ENCODE measurements at regions of chr4 and their contacts with region 1.

Region 1: GRCh38 chr4:129641179-129641578 is 545.2 kb downstream of the C4orf33 start:
- DNase-seq: peak; percentile 42
- ATAC-seq: peak; percentile 75
- H3K4me3 ChIP-seq: no peak overlapping the region
- H3K27ac ChIP-seq: no peak overlapping the region
- H3K4me1 ChIP-seq: no peaks in the 10 kb centered on the region
- H3K27me3 ChIP-seq: no peaks in the 10 kb centered on the region
- CTCF ChIP-seq: peak; percentile 56 to 86 (median 74); a peak in 5 of 6 replicates
- POLR2A ChIP-seq: no peak
- RAD21 ChIP-seq: peak; percentile 55

Region 2: DNA sequence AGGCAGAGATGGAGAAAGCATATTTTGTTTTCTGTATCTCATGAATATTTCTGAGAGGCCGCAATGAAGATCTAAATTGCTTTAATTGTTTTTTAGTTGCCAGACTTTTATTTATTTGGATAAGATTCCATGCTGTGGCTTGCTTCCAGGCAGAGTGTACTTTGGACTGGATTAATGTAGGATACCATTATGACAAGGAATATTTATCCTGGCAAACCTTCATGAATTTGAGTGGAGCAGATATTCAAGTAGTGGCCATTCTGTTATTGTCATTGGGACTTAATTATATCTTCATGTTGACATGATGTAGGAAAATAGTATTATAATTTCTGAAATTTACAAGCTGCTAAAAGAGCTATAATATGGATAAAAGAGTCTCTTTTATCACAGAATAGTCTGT is 362.3 kb before region 1 on chr4:
- CTCF ChIA-PET with region 1: no interaction called
- POLR2A ChIA-PET with region 1: no interaction called
- RAD21 ChIA-PET with region 1: no interaction called
- intact Hi-C with region 1: no loop called
- DNase-seq: no peak
- ATAC-seq: no peak
- H3K4me3 ChIP-seq: no peak overlapping the region
- H3K27ac ChIP-seq: no peak overlapping the region
- H3K4me1 ChIP-seq: no peaks in the 10 kb centered on the region
- H3K27me3 ChIP-seq: no peaks in the 10 kb centered on the region
- CTCF ChIP-seq: no peak
- POLR2A ChIP-seq: no peak
- RAD21 ChIP-seq: no peak

Region 3: GRCh38 chr4:129344058-129344457 is 297.1 kb before region 1 on chr4:
- CTCF ChIA-PET with region 1: interaction called, 4 read pairs
- POLR2A ChIA-PET with region 1: no interaction called
- RAD21 ChIA-PET with region 1: no interaction called
- intact Hi-C with region 1: loop called (anchors 1 kb)
- DNase-seq: peak; percentile 39
- ATAC-seq: peak; percentile 89
- H3K4me3 ChIP-seq: no peak overlapping the region
- H3K27ac ChIP-seq: no peak overlapping the region
- H3K4me1 ChIP-seq: peaks cover 0 to 3% of the 10 kb centered on the region in 2 experiments; a peak in 1 of 4 replicates
- H3K27me3 ChIP-seq: no peaks in the 10 kb centered on the region
- CTCF ChIP-seq: peak; percentile 57 to 77 (median 68); a peak in 5 of 6 replicates
- POLR2A ChIP-seq: no peak
- RAD21 ChIP-seq: peak; percentile 80

Region 4: DNA sequence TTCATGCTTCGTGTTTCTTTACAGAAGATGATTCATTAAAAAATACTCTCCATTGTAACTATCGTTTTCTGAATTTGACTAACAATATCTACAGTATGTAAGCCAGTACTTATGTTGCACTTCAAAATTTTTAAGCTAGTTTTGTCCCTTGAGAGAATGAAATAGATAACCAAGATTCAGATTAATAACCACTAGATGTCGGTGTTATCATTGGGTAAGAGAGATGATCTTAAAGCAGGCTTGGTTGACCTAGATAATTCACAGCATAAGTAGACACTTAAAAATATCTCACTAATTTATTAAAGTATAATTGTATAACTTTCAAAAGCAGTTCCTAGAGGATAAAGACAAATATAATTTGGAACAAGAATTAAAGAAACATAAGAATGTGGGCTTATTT is 114.4 kb before region 1 on chr4:
- CTCF ChIA-PET with region 1: interaction called, 10 read pairs
- POLR2A ChIA-PET with region 1: no interaction called
- RAD21 ChIA-PET with region 1: no interaction called
- intact Hi-C with region 1: loop called (anchors 1 kb)
- DNase-seq: peak; percentile 21
- ATAC-seq: no peak
- H3K4me3 ChIP-seq: no peak overlapping the region
- H3K27ac ChIP-seq: no peak overlapping the region
- H3K4me1 ChIP-seq: no peaks in the 10 kb centered on the region
- H3K27me3 ChIP-seq: no peaks in the 10 kb centered on the region
- CTCF ChIP-seq: peak; percentile 19 to 54 (median 39); a peak in 3 of 6 replicates
- POLR2A ChIP-seq: no peak
- RAD21 ChIP-seq: peak; percentile 66

Region 5: DNA sequence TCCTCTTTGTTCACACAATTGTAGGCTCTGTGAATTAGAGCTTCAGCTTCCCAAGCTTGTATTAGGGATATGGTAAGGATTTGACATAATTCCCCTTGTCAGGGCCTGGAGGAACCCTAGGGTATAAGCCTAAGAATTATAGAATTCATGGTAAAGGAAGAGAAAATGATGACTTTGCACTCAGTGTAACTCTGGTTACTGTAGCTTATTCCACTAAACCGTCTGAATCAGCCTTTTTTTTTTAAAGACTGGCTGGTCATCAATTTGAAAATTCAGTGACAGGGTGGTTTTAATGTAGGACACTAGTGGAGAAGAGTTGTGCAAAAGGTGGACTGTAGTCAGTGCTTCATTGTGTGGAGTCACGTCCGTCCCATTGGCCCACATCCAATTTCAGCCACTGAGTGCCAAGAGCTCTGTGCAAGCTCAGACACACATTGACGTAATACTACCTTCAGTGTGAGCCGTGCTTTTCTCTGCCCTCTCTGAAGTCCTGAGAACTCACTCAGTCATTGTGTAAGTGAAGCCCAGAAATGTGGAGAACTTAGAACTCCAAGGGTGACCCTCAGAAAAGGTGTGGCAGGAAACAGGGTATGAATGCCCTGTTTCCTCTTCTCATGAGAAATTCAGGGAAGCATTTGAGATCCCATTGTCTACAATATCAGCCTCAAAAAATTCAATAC is 95.4 kb before region 1 on chr4:
- CTCF ChIA-PET with region 1: no interaction called
- POLR2A ChIA-PET with region 1: no interaction called
- RAD21 ChIA-PET with region 1: no interaction called
- intact Hi-C with region 1: no loop called
- DNase-seq: no peak
- ATAC-seq: no peak
- H3K4me3 ChIP-seq: no peak overlapping the region
- H3K27ac ChIP-seq: no peak overlapping the region
- H3K4me1 ChIP-seq: no peaks in the 10 kb centered on the region
- H3K27me3 ChIP-seq: no peaks in the 10 kb centered on the region
- CTCF ChIP-seq: no peak
- POLR2A ChIP-seq: no peak
- RAD21 ChIP-seq: no peak

Region 6: DNA sequence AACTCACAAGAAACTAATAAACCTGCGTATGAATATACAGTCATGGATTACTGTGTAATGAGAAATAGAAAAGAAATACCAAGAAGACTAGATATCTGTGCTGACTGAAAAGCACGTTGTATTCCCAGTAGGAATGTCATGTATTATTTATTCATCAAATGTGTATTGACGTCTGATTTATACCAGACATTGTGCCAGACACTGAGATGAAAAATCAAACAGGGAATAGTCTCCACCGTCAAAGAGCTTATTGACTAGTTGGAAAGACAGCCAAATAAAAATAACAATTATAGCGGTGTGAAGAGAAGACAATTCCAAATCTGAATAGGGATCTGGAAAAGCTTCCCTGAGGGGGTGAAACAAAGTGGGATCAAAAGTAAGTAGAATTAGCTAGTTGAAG is 142.4 kb after region 1 on chr4:
- CTCF ChIA-PET with region 1: no interaction called
- POLR2A ChIA-PET with region 1: no interaction called
- RAD21 ChIA-PET with region 1: no interaction called
- intact Hi-C with region 1: no loop called
- DNase-seq: no peak
- ATAC-seq: no peak
- H3K4me3 ChIP-seq: no peak overlapping the region
- H3K27ac ChIP-seq: no peak overlapping the region
- H3K4me1 ChIP-seq: no peaks in the 10 kb centered on the region
- H3K27me3 ChIP-seq: no peaks in the 10 kb centered on the region
- CTCF ChIP-seq: no peak
- POLR2A ChIP-seq: no peak
- RAD21 ChIP-seq: no peak

Region 7: GRCh38 chr4:130110189-130110588 is 469.0 kb after region 1 on chr4:
- CTCF ChIA-PET with region 1: no interaction called
- POLR2A ChIA-PET with region 1: no interaction called
- RAD21 ChIA-PET with region 1: no interaction called
- intact Hi-C with region 1: no loop called
- DNase-seq: no peak
- ATAC-seq: no peak
- H3K4me3 ChIP-seq: no peak overlapping the region
- H3K27ac ChIP-seq: no peak overlapping the region
- H3K4me1 ChIP-seq: no peaks in the 10 kb centered on the region
- H3K27me3 ChIP-seq: no peaks in the 10 kb centered on the region
- CTCF ChIP-seq: no peak
- POLR2A ChIP-seq: no peak
- RAD21 ChIP-seq: no peak

Measured in HCT116 (cell line).